ENCODE measurements at regions of chr4 and their contacts with region 1.

Region 1: GRCh38 chr4:47704693-47705325 is 133.1 kb downstream of the CORIN start:
- DNase-seq: peak in 5 of 10 donors; percentile 17 to 50 (median 47)
- H3K4me3 ChIP-seq: no peak overlapping the region
- H3K27ac ChIP-seq: no peak overlapping the region
- H3K27me3 ChIP-seq: peaks cover 0 to 7% (median 0%) of the 10 kb centered on the region in 45 donors
- CTCF ChIP-seq: peak in 34 of 56 donors; percentile 7 to 48 (median 30)

Region 2: DNA sequence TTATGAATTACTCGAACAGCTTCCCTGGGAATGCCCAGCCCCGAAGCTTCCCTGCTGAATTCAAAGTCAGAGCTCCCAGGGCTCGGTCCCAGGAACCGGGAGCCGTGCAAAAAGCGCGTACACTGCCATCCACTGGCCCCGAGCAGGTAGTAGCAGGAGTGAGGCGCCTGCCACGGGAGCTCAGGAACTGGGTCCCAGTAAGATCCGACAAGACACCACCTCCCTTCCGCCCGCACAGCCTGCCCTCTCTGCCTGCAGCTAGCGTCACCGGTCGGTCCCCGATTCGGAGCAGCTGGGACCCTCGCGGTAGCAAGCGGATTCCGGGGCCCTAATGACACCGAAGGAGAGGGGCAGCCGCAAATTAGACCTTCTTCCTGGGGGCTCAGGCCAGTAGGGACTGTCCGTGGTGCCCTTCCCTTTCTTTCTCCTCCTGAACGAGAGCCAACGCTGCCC is 131.9 kb after region 1 on chr4:
- intact Hi-C with region 1: loop called in 1 of 2 experiments (anchors 10 kb)
- DNase-seq: peak; percentile 56 to 85 (median 78)
- H3K4me3 ChIP-seq: peak overlapping the region; percentile 21 to 78 (median 57)
- H3K27ac ChIP-seq: no peak overlapping the region
- H3K27me3 ChIP-seq: peaks cover 0 to 8% (median 0%) of the 10 kb centered on the region in 45 donors
- CTCF ChIP-seq: peak in 55 of 56 donors; percentile 22 to 75 (median 60)

Measured in dorsolateral prefrontal cortex (tissue), 120 donors.